CD8-positive, alpha-beta T cell (primary cell): ENCODE measurements at regions of chr2 and their contacts with region 1.

Region 1: GRCh38 chr2:24245986-24246776 is 71.3 kb downstream of the FAM228A start:
- DNase-seq: no peak
- ATAC-seq: no peak
- H3K4me3 ChIP-seq: no peak overlapping the region
- H3K4me3 Mint-ChIP-seq: no peak overlapping the region
- H3K27ac ChIP-seq: no peak overlapping the region
- H3K27ac Mint-ChIP-seq: no peak overlapping the region
- H3K4me1 ChIP-seq: no peaks in the 10 kb centered on the region
- H3K4me1 Mint-ChIP-seq: no peaks in the 10 kb centered on the region
- H3K27me3 ChIP-seq: no peaks in the 10 kb centered on the region
- H3K27me3 Mint-ChIP-seq: no peaks in the 10 kb centered on the region
- CTCF ChIP-seq: no peak

Region 2: DNA sequence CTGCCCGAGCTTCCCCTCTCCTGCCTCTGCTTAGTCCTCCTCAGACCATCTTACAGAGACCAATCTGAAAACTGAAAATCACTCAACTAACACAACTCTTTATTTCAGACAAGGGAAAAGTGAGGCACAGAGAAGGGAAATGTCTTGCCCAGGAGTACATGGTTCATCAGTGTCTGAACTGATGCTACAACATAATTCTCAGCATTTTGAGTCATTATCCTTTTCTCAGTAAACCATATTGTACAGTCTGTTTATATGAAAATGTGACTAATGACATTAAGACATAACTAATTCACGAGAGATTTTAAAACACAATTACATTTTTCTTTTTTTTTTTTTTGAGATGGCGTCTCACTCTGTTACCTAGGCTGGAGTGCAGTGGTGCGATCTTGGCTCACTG is 51.5 kb after region 1 on chr2:
- CTCF ChIA-PET with region 1: no interaction called
- POLR2A ChIA-PET with region 1: no interaction called
- intact Hi-C with region 1: loop called in 1 of 2 experiments (anchors 10 kb)
- DNase-seq: no peak
- ATAC-seq: no peak
- H3K4me3 ChIP-seq: no peak overlapping the region
- H3K4me3 Mint-ChIP-seq: no peak overlapping the region
- H3K27ac ChIP-seq: no peak overlapping the region
- H3K27ac Mint-ChIP-seq: no peak overlapping the region
- H3K4me1 ChIP-seq: no peaks in the 10 kb centered on the region
- H3K4me1 Mint-ChIP-seq: no peaks in the 10 kb centered on the region
- H3K27me3 ChIP-seq: no peaks in the 10 kb centered on the region
- H3K27me3 Mint-ChIP-seq: no peaks in the 10 kb centered on the region
- CTCF ChIP-seq: no peak

Region 3: GRCh38 chr2:24708537-24709152 is 462.5 kb after region 1 on chr2:
- CTCF ChIA-PET with region 1: no interaction called
- POLR2A ChIA-PET with region 1: no interaction called
- intact Hi-C with region 1: no loop called
- DNase-seq: no peak
- ATAC-seq: no peak
- H3K4me3 ChIP-seq: no peak overlapping the region
- H3K4me3 Mint-ChIP-seq: no peak overlapping the region
- H3K27ac ChIP-seq: no peak overlapping the region
- H3K27ac Mint-ChIP-seq: peak overlapping the region; percentile 12
- H3K4me1 ChIP-seq: no peaks in the 10 kb centered on the region
- H3K4me1 Mint-ChIP-seq: no peaks in the 10 kb centered on the region
- H3K27me3 ChIP-seq: no peaks in the 10 kb centered on the region
- H3K27me3 Mint-ChIP-seq: no peaks in the 10 kb centered on the region
- CTCF ChIP-seq: no peak